WTC11 (cell line): ENCODE measurements at regions of chr16 and their contacts with region 1.

Region 1: DNA sequence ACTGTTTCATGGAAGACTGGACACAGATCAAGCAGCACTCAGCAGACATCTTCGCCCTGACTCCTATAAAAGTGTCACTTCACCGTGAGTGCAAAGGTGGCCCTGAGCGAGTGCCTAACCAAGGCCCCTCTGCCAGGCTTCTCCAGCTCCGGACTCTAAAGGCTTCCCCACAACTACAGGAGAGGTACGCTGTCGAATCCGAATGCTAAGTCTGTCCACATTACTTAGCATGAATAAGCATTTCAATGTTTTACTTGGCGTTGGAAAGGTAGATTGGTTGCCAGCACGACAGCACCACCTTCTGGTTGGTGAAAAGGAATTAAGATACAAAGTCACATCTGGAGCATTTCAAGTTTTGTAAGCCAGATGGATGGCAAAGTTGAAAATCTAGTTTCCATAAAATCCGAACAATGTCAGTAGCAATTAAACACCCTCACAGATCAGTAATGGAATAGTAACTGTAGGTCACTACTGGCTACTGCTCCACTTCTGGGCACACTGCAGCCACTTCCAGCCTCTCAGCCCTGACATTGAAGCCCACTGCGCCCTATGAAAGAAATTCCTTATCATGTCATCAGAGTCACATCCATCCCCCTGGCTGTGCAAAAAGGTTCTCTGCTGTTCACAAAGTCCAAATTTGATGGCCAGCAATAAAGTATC is 100.9 kb downstream of the PARN start:
- DNase-seq: peak; percentile 72
- ATAC-seq: peak; percentile 85
- H3K4me3 Mint-ChIP-seq: peak overlapping the region; percentile 33
- H3K27ac Mint-ChIP-seq: peak overlapping the region; percentile 45
- H3K4me1 Mint-ChIP-seq: peaks cover 37% of the 10 kb centered on the region
- H3K27me3 Mint-ChIP-seq: no peaks in the 10 kb centered on the region; the same call in 1 of the 2 replicates
- CTCF ChIP-seq: peak; percentile 37

Region 2: DNA sequence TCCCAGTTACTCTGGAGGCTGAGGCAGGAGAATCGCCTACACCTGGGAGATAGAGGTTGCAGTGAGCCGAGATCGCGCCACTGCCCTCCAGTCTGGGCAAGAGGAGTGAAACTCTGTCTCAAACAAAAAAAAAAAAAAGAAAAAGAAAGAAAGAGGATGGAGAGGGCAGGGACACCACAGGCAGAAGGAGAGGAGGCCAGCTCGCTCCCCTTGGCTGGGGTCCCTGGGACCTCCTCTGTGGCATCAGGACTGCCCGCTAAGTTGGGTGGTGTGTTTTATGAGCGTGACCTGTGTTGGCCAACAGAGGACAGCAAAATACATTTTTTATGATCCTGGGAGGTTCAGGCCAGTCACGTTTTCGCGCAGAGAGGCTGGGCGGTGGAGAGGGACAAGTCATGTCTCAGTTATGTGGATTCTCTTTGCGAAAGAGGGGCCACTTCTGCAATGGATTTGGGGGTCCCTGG is 228.4 kb before region 1 on chr16:
- CTCF ChIA-PET with region 1: interaction called, 35 read pairs
- POLR2A ChIA-PET with region 1: interaction called, 3 read pairs
- DNase-seq: peak; percentile 59
- ATAC-seq: peak; percentile 36
- H3K4me3 Mint-ChIP-seq: peak overlapping the region; percentile 79
- H3K27ac Mint-ChIP-seq: peak overlapping the region; percentile 71; the same call in 1 of the 2 replicates
- H3K4me1 Mint-ChIP-seq: peaks cover 30% of the 10 kb centered on the region
- H3K27me3 Mint-ChIP-seq: peaks cover 8% of the 10 kb centered on the region; the same call in 1 of the 2 replicates
- CTCF ChIP-seq: no peak

Region 3: DNA sequence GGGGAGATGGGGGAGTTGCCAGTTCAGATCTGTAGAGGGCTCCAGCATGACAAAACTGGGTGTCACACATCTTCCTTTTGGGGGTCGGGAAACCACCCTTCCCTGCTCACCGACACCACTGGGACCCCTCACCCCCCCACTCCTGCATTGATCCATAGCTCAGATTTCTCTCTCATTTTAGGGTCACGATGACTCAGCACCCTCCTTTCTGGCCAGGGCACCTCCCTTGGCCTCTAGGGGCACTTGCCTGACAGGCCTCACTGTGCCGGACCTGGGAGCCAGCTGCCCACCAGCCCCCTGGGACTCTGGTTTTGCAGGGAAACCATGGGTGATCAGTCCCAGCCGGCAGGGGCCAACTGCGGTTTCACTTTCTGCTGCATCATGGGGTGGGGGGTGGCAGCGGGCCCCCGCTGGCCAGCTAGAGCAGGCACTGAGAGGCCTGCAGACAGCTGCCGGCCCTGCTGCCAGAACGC is 218.6 kb before region 1 on chr16:
- CTCF ChIA-PET with region 1: interaction called, 16 read pairs
- POLR2A ChIA-PET with region 1: no interaction called
- DNase-seq: peak; percentile 41
- ATAC-seq: peak; percentile 47
- H3K4me3 Mint-ChIP-seq: peak overlapping the region; percentile 4; the same call in 1 of the 2 replicates
- H3K27ac Mint-ChIP-seq: peak overlapping the region; percentile 95
- H3K4me1 Mint-ChIP-seq: peaks cover 60% of the 10 kb centered on the region
- H3K27me3 Mint-ChIP-seq: no peaks in the 10 kb centered on the region
- CTCF ChIP-seq: no peak